Vagina (tissue), 2 donors: ENCODE measurements at regions of chr12 and their contacts with region 1.

Region 1: GRCh38 chr12:110600254-110600653 is 13.7 kb upstream of the TCTN1 start:
- DNase-seq: no peak
- H3K4me3 ChIP-seq: no peak overlapping the region
- H3K27ac ChIP-seq: no peak overlapping the region
- H3K4me1 ChIP-seq: no peaks in the 10 kb centered on the region
- H3K27me3 ChIP-seq: no peaks in the 10 kb centered on the region
- CTCF ChIP-seq: peak; percentile 31 to 57 (median 46)
- POLR2A ChIP-seq: no peak

Region 2: DNA sequence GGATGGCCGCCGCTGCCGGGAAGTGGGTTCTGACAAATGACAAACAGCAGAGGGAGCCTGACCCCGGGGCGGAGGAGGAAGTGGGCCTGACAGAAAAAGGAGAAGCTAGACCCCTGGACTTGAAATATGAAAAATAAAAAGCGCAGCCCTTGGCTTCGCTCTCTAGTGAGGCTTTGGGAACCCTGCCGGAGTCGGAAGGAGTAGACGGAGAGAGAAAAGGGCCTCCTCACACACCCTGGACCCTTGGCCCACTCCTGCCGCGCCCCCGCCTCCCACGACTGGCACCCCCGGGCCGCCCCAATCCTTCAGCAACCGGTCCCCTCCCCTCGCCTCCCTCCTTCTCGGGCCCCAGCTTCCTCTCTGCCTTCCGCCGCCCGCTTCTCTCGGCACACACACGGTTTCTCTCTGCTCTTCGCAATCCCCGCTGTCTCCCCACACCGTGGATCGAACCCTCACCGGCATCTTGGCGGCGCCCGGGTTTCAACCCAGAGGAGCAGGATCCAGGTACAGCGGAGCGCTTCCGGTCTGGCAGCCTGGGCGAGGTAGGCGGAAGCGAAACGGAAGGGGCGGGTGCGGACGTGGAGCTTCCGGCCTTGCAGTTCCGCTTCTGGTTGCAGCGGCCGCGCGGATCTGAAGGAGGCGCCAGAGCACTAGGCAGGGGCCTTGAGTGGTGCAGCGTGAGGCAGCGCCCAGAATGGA is 150.3 kb before region 1 on chr12 and contains the start of gene ARPC3:
- intact Hi-C with region 1: loop called (anchors 5 kb)
- DNase-seq: peak; percentile 95 to 97
- H3K4me3 ChIP-seq: peak within 1 kb of the TSS; percentile 86 to 93
- H3K27ac ChIP-seq: peak within 1 kb of the TSS; percentile 90
- H3K4me1 ChIP-seq: peaks cover 37% of the 10 kb centered on the region
- H3K27me3 ChIP-seq: no peaks in the 10 kb centered on the region
- CTCF ChIP-seq: peak; percentile 66 to 84 (median 75)
- POLR2A ChIP-seq: peak in 1 of 2 donors; percentile 29
- total RNA-seq, gene ARPC3: 180 TPM

Region 3: DNA sequence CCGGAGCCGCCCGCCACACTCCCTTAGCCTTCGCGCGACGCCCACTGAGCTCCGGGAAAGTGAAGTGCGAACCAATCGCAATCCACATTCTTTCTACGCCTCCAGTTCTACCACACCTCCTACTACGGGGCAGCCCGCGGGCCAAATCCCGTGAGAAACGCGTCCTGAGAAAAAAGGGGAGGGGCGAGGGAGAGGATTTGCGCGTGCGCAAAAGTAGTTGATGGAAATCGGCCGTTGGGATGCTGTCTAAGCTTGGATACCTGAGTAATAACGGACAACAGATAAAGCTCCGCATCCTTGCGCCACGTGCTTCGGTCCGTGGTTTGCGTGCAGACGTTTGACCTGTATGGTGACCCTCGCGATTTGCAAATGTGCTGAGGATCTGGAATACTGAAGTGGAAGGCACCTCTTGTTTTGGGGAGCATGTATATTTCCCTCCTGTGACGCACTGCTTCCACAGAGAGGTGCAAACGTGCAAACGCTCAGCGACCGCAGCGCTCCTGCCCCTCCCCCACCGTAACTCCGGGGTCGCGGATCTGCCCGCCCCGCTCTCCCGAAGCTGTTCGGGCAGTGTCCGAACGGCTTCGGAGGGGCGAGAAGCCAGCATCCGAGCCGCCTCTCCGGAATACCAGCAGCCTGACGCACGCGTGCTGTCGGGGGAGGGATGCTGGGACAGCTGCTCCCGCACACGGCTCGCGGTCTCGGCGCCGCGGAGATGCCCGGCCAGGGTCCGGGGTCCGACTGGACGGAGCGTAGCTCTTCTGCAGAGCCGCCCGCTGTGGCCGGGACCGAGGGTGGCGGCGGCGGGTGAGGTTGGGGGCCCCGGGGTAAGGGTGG is 131.8 kb before region 1 on chr12 and contains the starts of genes FAM216A and GPN3:
- intact Hi-C with region 1: no loop called
- DNase-seq: peak; percentile 97 to 98
- H3K4me3 ChIP-seq: peak within 1 kb of the TSS; percentile 72 to 90
- H3K27ac ChIP-seq: peak within 1 kb of the TSS; percentile 96
- H3K4me1 ChIP-seq: peaks cover 30% of the 10 kb centered on the region
- H3K27me3 ChIP-seq: no peaks in the 10 kb centered on the region
- CTCF ChIP-seq: no peak
- POLR2A ChIP-seq: peak in 1 of 2 donors; percentile 63
- total RNA-seq, gene FAM216A: 11.0 TPM
- total RNA-seq, gene GPN3: 17.4 TPM

Region 4: GRCh38 chr12:110513842-110514241 is 86.4 kb before region 1 on chr12:
- intact Hi-C with region 1: loop called (anchors 5 kb)
- DNase-seq: no peak
- H3K4me3 ChIP-seq: no peak overlapping the region
- H3K27ac ChIP-seq: no peak overlapping the region
- H3K4me1 ChIP-seq: no peaks in the 10 kb centered on the region
- H3K27me3 ChIP-seq: no peaks in the 10 kb centered on the region
- CTCF ChIP-seq: no peak
- POLR2A ChIP-seq: no peak

Region 5: DNA sequence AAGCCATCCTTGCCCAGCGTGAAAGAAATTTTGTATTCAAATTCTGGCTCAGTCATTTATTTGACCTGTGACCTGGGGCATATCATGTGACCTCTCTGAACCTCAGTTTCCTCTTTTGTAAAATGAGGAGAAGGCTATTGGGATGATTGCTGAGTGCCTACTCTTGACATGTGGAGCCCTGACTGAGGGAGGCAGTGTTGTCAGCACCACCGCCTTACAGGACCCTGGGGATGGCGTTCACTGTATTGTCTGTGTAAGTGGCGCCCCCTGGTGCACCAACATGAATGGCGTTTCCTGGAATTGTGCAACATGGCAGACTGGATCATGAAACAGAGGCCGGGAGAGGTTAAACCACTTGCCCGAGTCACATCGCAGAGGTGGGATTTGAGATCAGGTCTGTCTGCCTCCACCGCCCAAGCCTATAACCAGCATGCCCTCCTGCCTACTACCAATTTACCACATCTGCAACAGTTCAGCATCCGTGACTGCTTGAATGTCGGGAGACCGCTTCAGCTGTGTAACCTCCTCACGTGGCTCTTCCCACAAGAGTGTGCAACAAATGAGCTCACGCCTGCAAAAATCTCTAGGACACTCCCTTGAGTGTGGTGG is 226.4 kb after region 1 on chr12:
- intact Hi-C with region 1: loop called (anchors 10 kb)
- DNase-seq: no peak
- H3K4me3 ChIP-seq: peak overlapping the region in 1 of 2 donors; percentile 1
- H3K27ac ChIP-seq: no peak overlapping the region
- H3K4me1 ChIP-seq: no peaks in the 10 kb centered on the region
- H3K27me3 ChIP-seq: no peaks in the 10 kb centered on the region
- CTCF ChIP-seq: peak; percentile 50 to 77 (median 53)
- POLR2A ChIP-seq: no peak

Region 6: GRCh38 chr12:111024205-111024801 is 424.0 kb after region 1 on chr12:
- intact Hi-C with region 1: no loop called
- DNase-seq: no peak
- H3K4me3 ChIP-seq: no peak overlapping the region
- H3K27ac ChIP-seq: no peak overlapping the region
- H3K4me1 ChIP-seq: no peaks in the 10 kb centered on the region
- H3K27me3 ChIP-seq: no peaks in the 10 kb centered on the region
- CTCF ChIP-seq: peak; percentile 39 to 47 (median 40)
- POLR2A ChIP-seq: no peak